CD8-positive, alpha-beta memory T cell (primary cell): ENCODE measurements at regions of chr11 and their contacts with region 1.

Region 1: GRCh38 chr11:117410861-117411710 is 83.4 kb downstream of the CEP164 start:
- DNase-seq: no peak
- H3K4me3 ChIP-seq: no peak overlapping the region
- H3K4me3 Mint-ChIP-seq: no peak overlapping the region
- H3K27ac ChIP-seq: no peak overlapping the region
- H3K27ac Mint-ChIP-seq: peak overlapping the region in 2 of 8 donors; percentile 64 to 89
- H3K4me1 ChIP-seq: no peaks in the 10 kb centered on the region
- H3K4me1 Mint-ChIP-seq: no peaks in the 10 kb centered on the region
- H3K27me3 ChIP-seq: no peaks in the 10 kb centered on the region
- H3K27me3 Mint-ChIP-seq: no peaks in the 10 kb centered on the region

Region 2: GRCh38 chr11:117426269-117426685 is 15.2 kb after region 1 on chr11:
- CTCF ChIA-PET with region 1: interaction called, 29 read pairs
- POLR2A ChIA-PET with region 1: interaction called, 4 read pairs
- DNase-seq: peak; percentile 38 to 75 (median 51)
- H3K4me3 ChIP-seq: no peak overlapping the region
- H3K4me3 Mint-ChIP-seq: peak overlapping the region in 2 of 7 donors; percentile 47 to 51
- H3K27ac ChIP-seq: no peak overlapping the region
- H3K27ac Mint-ChIP-seq: no peak overlapping the region
- H3K4me1 ChIP-seq: peaks cover 4% of the 10 kb centered on the region
- H3K4me1 Mint-ChIP-seq: peaks cover 4 to 13% (median 6%) of the 10 kb centered on the region in 3 donors
- H3K27me3 ChIP-seq: no peaks in the 10 kb centered on the region
- H3K27me3 Mint-ChIP-seq: peaks cover 5 to 18% of the 10 kb centered on the region in 2 donors